Activated CD4-positive, alpha-beta T cell treated with anti-CD3 and anti-CD28 coated beads, Interleukin-2, amount 10 ng/mL, durations not matched to agents 24 days and 14 days (primary cell): ENCODE measurements at regions of chr1 and their contacts with region 1.

Region 1: DNA sequence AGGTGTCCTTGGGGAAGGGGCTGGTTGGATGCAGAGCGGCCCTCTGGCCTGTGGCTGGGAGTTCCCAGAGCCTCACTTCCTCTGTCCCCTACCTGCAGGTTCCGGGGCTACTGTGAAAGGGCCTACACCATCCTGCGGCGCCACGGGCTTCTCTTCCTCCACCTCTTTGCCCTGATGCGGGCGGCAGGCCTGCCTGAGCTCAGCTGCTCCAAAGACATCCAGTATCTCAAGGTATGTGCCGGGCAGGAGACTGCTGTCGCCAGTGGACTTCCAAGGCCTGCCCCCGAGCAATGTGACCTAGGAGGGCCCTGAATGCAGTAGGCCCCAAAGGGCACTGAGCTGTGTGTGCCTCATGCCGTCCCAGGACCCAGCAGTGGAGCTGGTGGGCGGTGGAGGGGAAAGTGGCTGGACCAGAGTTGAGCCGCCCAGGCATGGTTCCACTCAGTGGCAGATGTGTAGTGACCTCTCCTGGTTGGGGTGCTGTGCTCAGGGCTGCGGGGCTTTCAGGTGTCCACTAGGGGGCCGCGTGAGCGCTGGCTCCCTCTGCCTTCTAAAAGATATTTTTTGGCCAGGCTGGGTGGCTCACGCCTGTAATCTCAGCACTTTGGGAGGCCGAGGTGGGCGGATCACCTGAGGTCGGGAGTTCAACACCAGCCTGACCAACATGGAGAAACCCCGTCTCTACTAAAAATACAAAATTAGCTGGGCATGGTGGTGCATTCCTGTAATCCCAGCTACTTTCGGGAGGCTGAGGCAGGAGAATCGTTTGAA is 73.4 kb downstream of the PIK3CD start:
- DNase-seq: peak; percentile 91
- H3K4me3 Mint-ChIP-seq: peak overlapping the region; percentile 23
- H3K27ac Mint-ChIP-seq: peak overlapping the region; percentile 56
- H3K4me1 Mint-ChIP-seq: peaks cover 46% of the 10 kb centered on the region
- H3K27me3 Mint-ChIP-seq: no peaks in the 10 kb centered on the region

Region 2: DNA sequence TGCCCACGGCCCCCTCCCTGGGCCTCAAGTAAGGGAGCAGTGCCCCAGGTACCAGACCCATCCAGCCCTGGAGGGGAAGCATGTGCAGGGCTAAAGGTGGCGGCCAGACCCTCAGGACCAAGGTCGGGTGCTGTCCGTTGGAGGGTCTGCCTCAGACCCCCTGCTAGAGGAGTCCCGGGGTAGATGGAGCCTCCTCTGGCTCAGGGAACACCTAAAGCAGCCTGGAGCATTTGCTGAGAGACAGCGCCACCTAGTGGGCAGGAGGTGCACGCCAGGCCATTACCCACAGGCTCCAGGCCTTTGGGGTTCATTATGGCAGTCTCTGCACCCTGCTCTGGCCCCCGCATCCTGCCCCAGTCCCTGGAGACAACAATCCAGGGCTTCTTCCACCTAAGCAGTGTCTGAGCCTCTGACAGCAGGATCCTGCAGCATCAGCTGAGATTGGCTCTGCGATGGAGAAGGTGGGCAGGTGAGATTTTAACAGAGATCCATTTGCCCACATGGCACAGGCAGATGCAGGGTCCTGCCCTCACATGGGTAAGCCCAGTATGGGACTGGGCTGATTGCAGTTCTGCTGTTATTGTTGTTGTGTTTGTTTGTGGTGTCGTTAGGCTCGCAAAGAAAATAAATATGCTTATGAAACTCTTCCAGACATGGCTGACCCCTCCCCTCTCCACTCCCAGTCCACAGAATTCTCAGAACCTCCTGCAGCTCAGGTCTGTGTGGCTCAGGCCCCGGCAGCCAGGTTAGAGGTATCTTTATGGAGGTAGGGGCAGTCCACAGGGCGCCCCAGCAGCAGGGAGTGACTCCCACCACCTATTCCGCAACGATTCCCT is 142.7 kb after region 1 on chr1:
- intact Hi-C with region 1: loop called (anchors 5 kb)
- DNase-seq: peak; percentile 96
- H3K4me3 Mint-ChIP-seq: no peak overlapping the region
- H3K27ac Mint-ChIP-seq: no peak overlapping the region
- H3K4me1 Mint-ChIP-seq: peaks cover 4% of the 10 kb centered on the region
- H3K27me3 Mint-ChIP-seq: peaks cover 2% of the 10 kb centered on the region